GM12878 (cell line): ENCODE measurements at regions of chr9 and their contacts with region 1.

Region 1: GRCh38 chr9:137254624-137255447 is at the start of gene NELFB:
- DNase-seq: peak; percentile 46
- ATAC-seq: peak; percentile 83
- H3K4me3 ChIP-seq: peak within 1 kb of the TSS; percentile 93
- H3K27ac ChIP-seq: peak within 1 kb of the TSS; percentile 77
- H3K4me1 ChIP-seq: peaks cover 14% of the 10 kb centered on the region
- H3K27me3 ChIP-seq: no peaks in the 10 kb centered on the region
- CTCF ChIP-seq: no peak; a peak in 1 of 6 replicates
- EP300 ChIP-seq: no peak
- POLR2A ChIP-seq: peak; percentile 78
- RAD21 ChIP-seq: no peak
- polyA plus RNA-seq, gene NELFB: 0.19 to 0.68 TPM

Region 2: GRCh38 chr9:137269231-137269772 is 14.5 kb after region 1 on chr9:
- CTCF ChIA-PET with region 1: interaction called, 5 read pairs
- POLR2A ChIA-PET with region 1: interaction called, 13 read pairs
- RAD21 ChIA-PET with region 1: interaction called, 3 read pairs
- SMC1A ChIA-PET with region 1: no interaction called
- in situ Hi-C with region 1: no loop called
- intact Hi-C with region 1: no loop called
- DNase-seq: peak; percentile 34
- ATAC-seq: peak; percentile 64
- H3K4me3 ChIP-seq: peak overlapping the region; percentile 46; the same call in 1 of the 2 replicates
- H3K27ac ChIP-seq: peak overlapping the region; percentile 47
- H3K4me1 ChIP-seq: peaks cover 22% of the 10 kb centered on the region
- H3K27me3 ChIP-seq: no peaks in the 10 kb centered on the region
- CTCF ChIP-seq: no peak
- EP300 ChIP-seq: no peak
- POLR2A ChIP-seq: no peak; the same call in 1 of the 2 replicates
- RAD21 ChIP-seq: no peak